ENCODE measurements at regions of chr3 and their contacts with region 1.

Region 1: GRCh38 chr3:4978204-4978965 is 852 bp upstream of the BHLHE40 start:
- DNase-seq: peak; percentile 86
- H3K4me3 ChIP-seq: peak overlapping the region; percentile 69 to 95 (median 86)
- H3K27ac ChIP-seq: peak overlapping the region; percentile 95 to 100 (median 99)
- H3K4me1 ChIP-seq: peaks cover 10 to 61% (median 23%) of the 10 kb centered on the region in 3 donors
- H3K27me3 ChIP-seq: no peaks in the 10 kb centered on the region
- CTCF ChIP-seq: peak in 2 of 6 experiments; percentile 4 to 10
- POLR2A ChIP-seq: peak in 3 of 4 donors; percentile 49 to 83 (median 83)

Region 2: GRCh38 chr3:4722103-4722502 is 256.3 kb before region 1 on chr3:
- intact Hi-C with region 1: loop called (anchors 5 kb)
- DNase-seq: no peak
- H3K4me3 ChIP-seq: no peak overlapping the region
- H3K27ac ChIP-seq: peak overlapping the region; percentile 70 to 86 (median 83)
- H3K4me1 ChIP-seq: peaks cover 0 to 77% (median 47%) of the 10 kb centered on the region in 3 donors
- H3K27me3 ChIP-seq: no peaks in the 10 kb centered on the region
- CTCF ChIP-seq: peak in 5 of 6 experiments; percentile 34 to 66 (median 51)
- POLR2A ChIP-seq: no peak

Region 3: DNA sequence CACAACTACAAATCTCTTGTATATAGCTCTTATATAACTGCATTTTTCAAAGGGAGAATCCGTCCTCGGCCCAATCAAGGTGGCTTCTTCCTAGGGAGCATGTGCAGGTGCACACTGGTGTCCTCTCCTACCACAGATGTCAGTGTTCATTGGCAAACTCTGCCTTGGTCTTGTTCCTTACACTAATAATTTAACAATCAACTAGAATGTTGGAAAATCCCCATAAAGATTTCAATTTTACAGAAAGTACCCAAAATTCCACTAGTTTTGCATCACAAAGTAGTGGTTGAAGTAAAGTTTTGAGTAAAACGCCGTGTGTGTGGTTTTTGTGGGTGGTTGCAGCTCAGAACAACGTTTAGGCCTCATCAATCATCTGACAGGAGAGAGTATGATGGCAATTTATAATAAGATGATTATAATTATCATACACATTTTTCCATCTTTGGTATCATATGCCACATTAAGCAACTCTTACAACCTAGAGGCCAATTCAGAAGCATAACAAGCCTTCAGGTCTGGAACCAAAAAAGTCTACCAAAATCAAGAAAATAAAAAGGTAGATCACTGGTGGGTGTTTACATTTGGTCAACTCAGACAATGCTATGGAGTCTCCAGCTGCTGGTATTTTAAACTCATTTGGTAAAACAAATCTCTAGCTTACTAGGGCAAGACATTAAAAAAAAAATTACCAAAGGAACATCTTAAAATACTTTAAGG is 128.0 kb before region 1 on chr3:
- intact Hi-C with region 1: no loop called
- DNase-seq: no peak
- H3K4me3 ChIP-seq: no peak overlapping the region
- H3K27ac ChIP-seq: peak overlapping the region in 2 of 4 donors; percentile 18 to 29
- H3K4me1 ChIP-seq: peaks cover 11 to 60% (median 19%) of the 10 kb centered on the region in 3 donors
- H3K27me3 ChIP-seq: no peaks in the 10 kb centered on the region
- CTCF ChIP-seq: no peak
- POLR2A ChIP-seq: no peak

Measured in esophagus squamous epithelium (tissue), 5 donors.